ENCODE measurements at regions of chr11 and their contacts with region 1.

Region 1: DNA sequence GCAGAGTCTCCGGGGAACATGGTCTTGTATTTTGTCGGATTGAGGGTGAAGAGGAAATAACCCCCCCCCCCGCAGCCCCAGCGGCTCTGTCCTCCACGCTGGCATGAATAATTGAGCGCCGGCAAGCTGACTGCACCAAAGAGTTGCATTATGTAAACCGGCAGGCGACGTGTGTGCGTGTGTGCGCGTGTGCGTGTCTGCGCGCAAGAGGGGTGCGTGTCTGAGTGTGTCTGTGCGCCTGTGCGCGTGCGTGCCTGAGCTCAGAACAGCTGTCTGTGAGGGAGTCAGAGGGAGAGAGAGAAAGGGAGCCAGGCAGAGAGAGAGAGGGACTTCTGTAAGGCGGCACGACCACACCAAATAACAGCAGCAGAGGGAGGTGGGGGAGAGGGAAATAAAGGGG is 94.4 kb downstream of the SCN3B start:
- DNase-seq: peak; percentile 77
- ATAC-seq: peak; percentile 89
- H3K4me3 Mint-ChIP-seq: peak overlapping the region; percentile 57
- H3K27ac Mint-ChIP-seq: peak overlapping the region; percentile 79
- H3K4me1 Mint-ChIP-seq: peaks cover 19% of the 10 kb centered on the region
- H3K27me3 Mint-ChIP-seq: peaks cover under 1% of the 10 kb centered on the region

Region 2: GRCh38 chr11:123407130-123407995 is 152.6 kb before region 1 on chr11:
- CTCF ChIA-PET with region 1: interaction called, 3 read pairs
- POLR2A ChIA-PET with region 1: no interaction called
- intact Hi-C with region 1: loop called (anchors 1 to 10 kb)
- DNase-seq: peak; percentile 79
- ATAC-seq: peak; percentile 74
- H3K4me3 Mint-ChIP-seq: peak overlapping the region; percentile 33
- H3K27ac Mint-ChIP-seq: peak overlapping the region; percentile 63
- H3K4me1 Mint-ChIP-seq: peaks cover 26% of the 10 kb centered on the region
- H3K27me3 Mint-ChIP-seq: peaks cover 5% of the 10 kb centered on the region

Region 3: GRCh38 chr11:123511037-123511870 is 48.8 kb before region 1 on chr11:
- CTCF ChIA-PET with region 1: interaction called, 4 read pairs
- POLR2A ChIA-PET with region 1: no interaction called
- intact Hi-C with region 1: loop called (anchors 1 kb)
- DNase-seq: peak; percentile 89
- ATAC-seq: peak; percentile 99
- H3K4me3 Mint-ChIP-seq: no peak overlapping the region
- H3K27ac Mint-ChIP-seq: no peak overlapping the region
- H3K4me1 Mint-ChIP-seq: peaks cover 8% of the 10 kb centered on the region
- H3K27me3 Mint-ChIP-seq: no peaks in the 10 kb centered on the region

Measured in activated CD4-positive, alpha-beta T cell treated with anti-CD3 and anti-CD28 coated beads for 36 hours (primary cell).